Psoas muscle (tissue), 8 donors: ENCODE measurements at regions of chr3 and their contacts with region 1.

Region 1: DNA sequence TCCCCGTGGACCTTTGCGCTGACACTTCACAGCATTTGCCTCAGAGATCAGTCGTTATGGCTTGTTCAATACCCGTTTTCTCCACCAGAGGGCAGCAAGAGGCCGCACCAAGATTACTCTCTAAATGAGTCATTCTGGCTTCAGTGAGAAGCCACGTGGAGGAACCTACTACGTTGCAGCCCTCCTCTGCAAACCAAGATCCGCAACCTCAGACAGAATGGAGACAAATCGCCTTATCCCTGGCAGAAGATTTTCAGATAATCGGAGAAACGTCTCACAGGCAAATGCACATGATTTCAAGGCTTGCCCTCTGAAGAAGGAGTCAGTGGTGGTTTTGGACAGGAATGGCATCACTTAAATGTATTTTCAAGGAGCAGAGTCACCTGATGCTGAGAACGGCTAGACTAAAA is 60.5 kb downstream of the GTPBP8 start:
- DNase-seq: peak; percentile 69 to 84
- ATAC-seq: peak; percentile 98 to 100 (median 99)
- H3K4me3 ChIP-seq: peak overlapping the region; percentile 29
- H3K27ac ChIP-seq: no peak overlapping the region
- H3K4me1 ChIP-seq: peaks cover 7% of the 10 kb centered on the region
- H3K27me3 ChIP-seq: no peaks in the 10 kb centered on the region
- CTCF ChIP-seq: peak; percentile 97

Region 2: DNA sequence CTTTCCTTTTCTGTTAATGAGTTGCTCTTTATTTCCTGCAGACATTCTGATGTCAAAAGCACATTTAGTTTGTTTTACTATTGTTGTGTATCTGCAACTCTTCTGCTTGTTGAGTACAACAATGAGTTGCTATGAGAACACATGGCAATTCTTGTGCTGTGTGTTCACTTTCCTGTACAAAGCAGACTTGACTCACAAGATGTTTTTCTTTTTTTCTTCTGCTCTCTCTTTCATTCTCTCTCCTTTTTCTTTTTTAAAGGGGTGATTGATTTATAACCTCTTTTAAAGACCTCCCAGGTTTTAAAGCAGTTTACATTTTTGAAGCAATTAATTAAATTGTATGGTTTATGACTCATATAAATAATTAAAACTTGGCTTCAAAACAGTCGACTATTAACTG is 1104.1 kb before region 1 on chr3:
- intact Hi-C with region 1: no loop called
- DNase-seq: no peak
- ATAC-seq: no peak
- H3K4me3 ChIP-seq: no peak overlapping the region
- H3K27ac ChIP-seq: no peak overlapping the region
- H3K4me1 ChIP-seq: no peaks in the 10 kb centered on the region
- H3K27me3 ChIP-seq: peaks cover 0 to 4% (median 0%) of the 10 kb centered on the region in 3 donors
- CTCF ChIP-seq: no peak

Region 3: GRCh38 chr3:113136071-113136470 is 84.8 kb after region 1 on chr3:
- intact Hi-C with region 1: loop called in 1 of 2 experiments (anchors 5 kb)
- DNase-seq: no peak
- ATAC-seq: peak in 1 of 4 donors; percentile 57
- H3K4me3 ChIP-seq: no peak overlapping the region
- H3K27ac ChIP-seq: no peak overlapping the region
- H3K4me1 ChIP-seq: no peaks in the 10 kb centered on the region
- H3K27me3 ChIP-seq: no peaks in the 10 kb centered on the region
- CTCF ChIP-seq: peak; percentile 63